Caco-2 (cell line): ENCODE measurements at regions of chr12 and their contacts with region 1.

Region 1: DNA sequence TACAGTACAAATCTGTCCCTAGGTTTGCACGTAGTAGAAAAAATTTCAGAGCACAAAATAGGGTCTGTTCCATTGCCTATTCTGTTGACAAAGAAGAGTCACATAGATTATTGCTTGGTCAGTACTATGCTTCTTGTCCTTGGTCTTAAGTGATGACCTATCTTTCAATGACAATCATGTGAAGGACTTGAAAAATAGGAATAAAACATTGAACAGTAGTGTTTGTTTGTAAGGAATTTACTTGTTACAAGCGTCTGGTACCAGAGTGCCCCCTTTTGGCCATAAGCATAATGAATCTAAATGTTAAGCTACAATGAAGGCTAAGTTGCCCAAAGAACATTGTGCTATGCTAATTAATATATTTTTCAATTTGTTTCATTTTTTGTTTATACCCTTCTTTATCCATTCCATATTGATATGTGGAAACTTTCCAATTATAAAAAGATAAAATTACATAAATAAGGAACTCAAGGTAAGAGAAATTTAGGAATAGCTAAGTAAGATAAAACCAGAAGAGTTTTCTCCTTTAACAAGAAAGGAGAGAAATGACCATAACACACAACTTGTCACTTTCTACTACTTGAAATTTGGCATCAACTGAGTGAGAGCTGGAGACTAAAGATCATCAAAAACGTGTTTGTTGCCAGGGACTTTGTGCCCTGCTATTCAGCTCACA is 204.7 kb downstream of the EPS8 start:
- DNase-seq: peak in 1 of 2 experiments; percentile 20
- H3K4me3 ChIP-seq: no peak overlapping the region
- H3K4me3 Mint-ChIP-seq: no peak overlapping the region
- H3K27ac Mint-ChIP-seq: no peak overlapping the region
- H3K4me1 ChIP-seq: no peaks in the 10 kb centered on the region
- H3K4me1 Mint-ChIP-seq: no peaks in the 10 kb centered on the region
- H3K27me3 ChIP-seq: no peaks in the 10 kb centered on the region; the same call in 1 of the 2 replicates
- H3K27me3 Mint-ChIP-seq: peaks cover 3% of the 10 kb centered on the region
- CTCF ChIP-seq: peak; percentile 48 to 49

Region 2: DNA sequence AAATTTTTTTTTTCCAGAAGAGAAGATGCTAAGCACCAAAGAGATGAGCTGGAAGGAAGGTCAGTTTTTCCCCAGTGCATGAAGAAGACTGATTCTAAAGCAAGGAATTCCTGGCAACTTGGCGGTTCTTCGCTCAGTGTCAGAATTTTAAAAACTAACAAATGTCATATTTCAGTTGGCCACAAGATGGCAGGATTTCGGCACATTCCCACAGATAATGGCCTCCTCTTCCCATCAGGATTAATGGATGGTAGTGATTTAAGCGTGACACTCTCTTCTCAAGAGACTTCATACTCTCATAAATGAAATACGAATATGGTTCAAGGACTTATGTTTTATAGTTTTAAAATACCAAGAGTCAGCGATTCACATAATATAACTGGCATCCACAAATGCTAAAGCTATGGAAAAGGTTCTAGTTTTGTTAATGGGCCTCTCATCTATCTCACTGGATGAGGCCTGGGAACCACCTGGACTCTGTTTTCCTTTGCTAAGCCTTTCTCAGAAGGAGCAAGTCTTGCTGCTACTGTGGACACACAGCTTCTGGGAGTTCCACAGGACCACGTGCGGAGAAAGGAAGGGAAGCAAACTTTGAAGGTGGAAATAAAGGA is 308.3 kb before region 1 on chr12:
- CTCF ChIA-PET with region 1: no interaction called
- POLR2A ChIA-PET with region 1: no interaction called
- intact Hi-C with region 1: loop called (anchors 1 kb)
- DNase-seq: peak in 1 of 2 experiments; percentile 69
- H3K4me3 ChIP-seq: no peak overlapping the region
- H3K4me3 Mint-ChIP-seq: no peak overlapping the region
- H3K27ac Mint-ChIP-seq: no peak overlapping the region
- H3K4me1 ChIP-seq: no peaks in the 10 kb centered on the region
- H3K4me1 Mint-ChIP-seq: no peaks in the 10 kb centered on the region
- H3K27me3 ChIP-seq: no peaks in the 10 kb centered on the region
- H3K27me3 Mint-ChIP-seq: peaks cover 8% of the 10 kb centered on the region
- CTCF ChIP-seq: peak; percentile 61 to 83

Region 3: GRCh38 chr12:15808652-15809051 is 224.1 kb after region 1 on chr12:
- CTCF ChIA-PET with region 1: no interaction called
- POLR2A ChIA-PET with region 1: no interaction called
- intact Hi-C with region 1: no loop called
- DNase-seq: no peak
- H3K4me3 ChIP-seq: no peak overlapping the region
- H3K4me3 Mint-ChIP-seq: no peak overlapping the region
- H3K27ac Mint-ChIP-seq: no peak overlapping the region
- H3K4me1 ChIP-seq: no peaks in the 10 kb centered on the region
- H3K4me1 Mint-ChIP-seq: no peaks in the 10 kb centered on the region
- H3K27me3 ChIP-seq: no peaks in the 10 kb centered on the region
- H3K27me3 Mint-ChIP-seq: peaks cover 9% of the 10 kb centered on the region
- CTCF ChIP-seq: no peak